Activated B cell treated with CpG ODN at 0.5 μM for 24 hours (primary cell): ENCODE measurements at regions of chr11 and their contacts with region 1.

Region 1: GRCh38 chr11:88552377-88553062 is 215.0 kb upstream of the CTSC start:
- DNase-seq: peak; percentile 21
- ATAC-seq: peak; percentile 40
- H3K4me3 Mint-ChIP-seq: no peak overlapping the region
- H3K27ac Mint-ChIP-seq: no peak overlapping the region
- H3K4me1 Mint-ChIP-seq: no peaks in the 10 kb centered on the region
- H3K27me3 Mint-ChIP-seq: peaks cover 4% of the 10 kb centered on the region
- CTCF ChIP-seq: no peak

Region 2: GRCh38 chr11:87352759-87353707 is 1199.5 kb before region 1 on chr11:
- CTCF ChIA-PET with region 1: interaction called, 14 read pairs
- POLR2A ChIA-PET with region 1: no interaction called
- intact Hi-C with region 1: loop called (anchors 1 kb)
- DNase-seq: peak; percentile 75
- ATAC-seq: peak; percentile 95
- H3K4me3 Mint-ChIP-seq: no peak overlapping the region
- H3K27ac Mint-ChIP-seq: no peak overlapping the region
- H3K4me1 Mint-ChIP-seq: peaks cover 14% of the 10 kb centered on the region
- H3K27me3 Mint-ChIP-seq: no peaks in the 10 kb centered on the region
- CTCF ChIP-seq: peak; percentile 88